ENCODE measurements at regions of chr11 and their contacts with region 1.

Region 1: DNA sequence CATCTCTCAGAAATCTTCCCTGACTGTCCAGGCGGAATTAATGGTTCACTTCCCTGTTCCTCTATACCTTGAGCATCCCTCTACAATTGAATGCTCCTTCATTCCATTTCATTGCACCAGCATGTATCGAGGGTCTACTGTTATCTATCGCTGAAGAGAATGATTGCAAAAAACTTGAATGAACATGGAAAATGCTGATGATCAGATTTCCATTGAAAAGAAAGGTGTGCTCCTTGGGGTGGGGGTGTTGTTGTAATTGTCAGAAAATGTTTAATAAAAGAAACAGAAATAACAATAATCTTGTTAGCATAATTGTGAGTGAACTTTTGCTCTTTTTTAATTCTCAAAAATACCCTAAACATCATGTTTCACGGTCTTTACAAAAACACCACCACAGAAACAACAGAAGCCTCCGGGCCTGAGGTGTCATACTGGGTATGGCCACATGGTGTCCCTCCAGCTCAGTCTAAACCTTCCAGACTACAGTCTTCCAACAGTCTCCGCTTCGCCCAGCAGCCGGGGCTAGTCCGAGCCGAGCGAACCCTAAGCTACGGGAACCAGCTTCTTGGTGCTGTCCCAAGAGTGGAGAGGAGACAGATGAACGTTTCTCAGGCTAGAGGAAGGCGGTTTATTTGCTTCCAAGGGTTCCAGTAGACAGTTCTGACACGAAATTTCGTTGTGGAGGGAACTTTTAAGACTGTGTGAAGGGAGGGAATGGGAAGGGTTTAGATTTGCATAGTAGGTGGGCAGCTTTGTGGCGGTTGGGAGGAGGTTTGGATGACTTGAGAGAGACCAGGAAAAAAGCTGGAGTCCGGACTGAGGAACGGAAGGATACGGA is 75.8 kb upstream of the ZBED5 start:
- DNase-seq: peak; percentile 93
- H3K4me3 ChIP-seq: peak overlapping the region; percentile 36
- H3K4me1 ChIP-seq: peaks cover 33% of the 10 kb centered on the region
- H3K27me3 ChIP-seq: no peaks in the 10 kb centered on the region

Region 2: DNA sequence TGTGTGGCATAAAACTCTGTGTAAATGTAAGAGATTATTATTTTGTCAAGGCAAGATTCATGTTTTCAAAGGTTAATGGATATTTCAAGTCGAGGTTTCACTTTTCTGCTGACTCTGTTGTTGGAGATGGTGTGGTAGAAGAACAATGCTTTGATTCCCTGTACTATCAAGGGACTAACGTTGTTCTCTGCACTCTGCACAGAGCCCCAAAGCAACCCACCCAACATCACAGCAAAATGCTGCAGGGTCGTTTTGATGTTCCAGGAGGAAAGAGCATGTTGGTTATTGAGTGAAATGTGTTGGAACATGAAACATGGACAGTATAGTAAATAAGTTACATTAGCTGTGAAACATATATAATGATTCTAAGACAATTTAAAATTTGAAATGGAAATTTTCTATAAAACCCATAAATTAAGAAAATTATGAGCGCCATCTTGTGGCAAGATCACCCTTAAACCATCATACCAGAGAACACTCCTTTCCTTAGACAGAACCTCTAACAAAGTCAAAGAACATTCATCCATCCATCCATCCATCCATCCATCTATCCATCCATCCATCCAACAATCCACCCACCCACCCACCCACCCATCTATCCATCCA is 88.6 kb after region 1 on chr11:
- in situ Hi-C with region 1: loop called (anchors 5 kb)
- DNase-seq: peak; percentile 41 to 47
- H3K4me3 ChIP-seq: no peak overlapping the region
- H3K4me1 ChIP-seq: peaks cover 8% of the 10 kb centered on the region
- H3K27me3 ChIP-seq: no peaks in the 10 kb centered on the region

Region 3: GRCh38 chr11:11044137-11044855 is 110.6 kb after region 1 on chr11:
- in situ Hi-C with region 1: no loop called
- DNase-seq: no peak
- H3K4me3 ChIP-seq: no peak overlapping the region
- H3K4me1 ChIP-seq: no peaks in the 10 kb centered on the region
- H3K27me3 ChIP-seq: no peaks in the 10 kb centered on the region

Measured in HAP-1 (cell line).